Activated CD4-positive, alpha-beta memory T cell treated with anti-CD3 and anti-CD28 coated beads for 36 hours (primary cell): ENCODE measurements at regions of chr5 and their contacts with region 1.

Region 1: DNA sequence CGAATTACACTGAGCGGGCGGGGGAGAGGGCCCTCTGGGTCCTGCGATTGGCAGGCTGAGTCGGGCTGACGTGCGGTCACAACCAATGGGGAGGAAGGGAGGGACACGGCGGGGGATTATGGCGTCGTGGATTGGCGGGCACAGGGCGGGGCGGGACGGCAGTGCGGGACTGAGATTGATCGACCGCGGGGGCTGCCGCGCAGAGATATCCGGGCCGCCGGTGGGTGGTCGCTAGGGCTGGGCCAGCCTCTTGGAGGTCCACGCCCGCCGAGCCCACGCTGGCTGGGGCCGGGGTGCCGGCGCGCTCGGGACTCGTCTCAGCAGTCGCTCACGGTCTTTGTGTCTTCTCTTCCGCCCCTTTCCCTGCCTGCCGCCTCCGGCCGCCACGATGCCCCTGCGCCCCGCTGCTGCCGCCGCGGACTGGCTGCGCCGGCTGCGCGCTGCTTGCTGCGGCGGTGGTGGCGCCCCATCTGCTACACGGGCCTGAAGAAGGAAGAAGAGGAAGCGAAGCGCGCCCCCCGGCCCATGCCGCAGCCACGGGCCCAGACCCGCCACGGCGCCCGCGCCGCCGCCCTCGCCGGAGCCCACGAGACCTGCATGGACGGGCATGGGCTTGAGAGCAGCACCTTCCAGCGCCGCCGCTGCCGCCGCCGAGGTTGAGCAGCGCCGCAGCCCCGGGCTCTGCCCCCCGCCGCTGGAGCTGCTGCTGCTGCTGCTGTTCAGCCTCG is at the start of gene RGMB:
- DNase-seq: peak; percentile 95
- H3K4me3 Mint-ChIP-seq: peak within 1 kb of the TSS; percentile 91
- H3K27ac Mint-ChIP-seq: peak within 1 kb of the TSS; percentile 50
- H3K4me1 Mint-ChIP-seq: peaks cover 45% of the 10 kb centered on the region
- H3K27me3 Mint-ChIP-seq: peaks cover 21% of the 10 kb centered on the region
- total RNA-seq, gene RGMB: 3.3 to 3.8 TPM

Region 2: GRCh38 chr5:97183100-97183929 is 1590.3 kb before region 1 on chr5 and contains the start of gene RIOK2:
- CTCF ChIA-PET with region 1: no interaction called
- POLR2A ChIA-PET with region 1: no interaction called
- intact Hi-C with region 1: loop called (anchors 1 kb)
- DNase-seq: peak; percentile 96
- H3K4me3 Mint-ChIP-seq: peak within 1 kb of the TSS; percentile 87
- H3K27ac Mint-ChIP-seq: peak within 1 kb of the TSS; percentile 98
- H3K4me1 Mint-ChIP-seq: peaks cover 34% of the 10 kb centered on the region
- H3K27me3 Mint-ChIP-seq: no peaks in the 10 kb centered on the region
- total RNA-seq, gene RIOK2: 31.8 to 41.5 TPM

Region 3: GRCh38 chr5:97231025-97231636 is 1542.5 kb before region 1 on chr5:
- CTCF ChIA-PET with region 1: interaction called, 14 read pairs
- POLR2A ChIA-PET with region 1: no interaction called
- intact Hi-C with region 1: loop called (anchors 1 kb)
- DNase-seq: peak; percentile 14
- H3K4me3 Mint-ChIP-seq: no peak overlapping the region
- H3K27ac Mint-ChIP-seq: no peak overlapping the region
- H3K4me1 Mint-ChIP-seq: no peaks in the 10 kb centered on the region
- H3K27me3 Mint-ChIP-seq: peaks cover 4% of the 10 kb centered on the region

Region 4: GRCh38 chr5:97547999-97548738 is 1225.5 kb before region 1 on chr5:
- CTCF ChIA-PET with region 1: no interaction called
- POLR2A ChIA-PET with region 1: no interaction called
- intact Hi-C with region 1: loop called (anchors 10 kb)
- DNase-seq: no peak
- H3K4me3 Mint-ChIP-seq: no peak overlapping the region
- H3K27ac Mint-ChIP-seq: no peak overlapping the region
- H3K4me1 Mint-ChIP-seq: peaks cover 4% of the 10 kb centered on the region
- H3K27me3 Mint-ChIP-seq: no peaks in the 10 kb centered on the region

Region 5: DNA sequence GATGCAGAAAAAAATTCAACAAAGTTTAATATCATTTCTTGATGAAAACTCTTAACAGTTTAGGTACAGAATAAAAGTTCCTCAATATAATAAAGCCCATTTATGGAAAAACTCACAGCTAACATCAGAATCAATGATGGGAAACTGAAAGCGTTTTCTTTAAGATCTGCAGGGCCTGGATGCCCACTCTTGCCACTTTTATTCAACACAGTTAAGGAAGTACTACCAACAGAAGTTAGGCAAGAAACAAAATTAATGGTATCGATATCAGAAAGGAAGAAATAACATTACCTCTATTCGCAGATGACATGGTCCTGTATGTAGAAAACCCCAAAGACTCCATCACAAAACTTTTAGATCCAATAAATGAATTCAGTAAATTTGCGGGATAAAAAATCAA is 542.5 kb before region 1 on chr5:
- CTCF ChIA-PET with region 1: no interaction called
- POLR2A ChIA-PET with region 1: no interaction called
- intact Hi-C with region 1: loop called (anchors 5 kb)
- DNase-seq: no peak
- H3K4me3 Mint-ChIP-seq: no peak overlapping the region
- H3K27ac Mint-ChIP-seq: no peak overlapping the region
- H3K4me1 Mint-ChIP-seq: no peaks in the 10 kb centered on the region
- H3K27me3 Mint-ChIP-seq: no peaks in the 10 kb centered on the region

Region 6: GRCh38 chr5:98679963-98680362 is 93.7 kb before region 1 on chr5:
- CTCF ChIA-PET with region 1: no interaction called
- POLR2A ChIA-PET with region 1: no interaction called
- intact Hi-C with region 1: no loop called
- DNase-seq: no peak
- H3K4me3 Mint-ChIP-seq: no peak overlapping the region
- H3K27ac Mint-ChIP-seq: no peak overlapping the region
- H3K4me1 Mint-ChIP-seq: no peaks in the 10 kb centered on the region
- H3K27me3 Mint-ChIP-seq: peaks cover 3% of the 10 kb centered on the region

Region 7: DNA sequence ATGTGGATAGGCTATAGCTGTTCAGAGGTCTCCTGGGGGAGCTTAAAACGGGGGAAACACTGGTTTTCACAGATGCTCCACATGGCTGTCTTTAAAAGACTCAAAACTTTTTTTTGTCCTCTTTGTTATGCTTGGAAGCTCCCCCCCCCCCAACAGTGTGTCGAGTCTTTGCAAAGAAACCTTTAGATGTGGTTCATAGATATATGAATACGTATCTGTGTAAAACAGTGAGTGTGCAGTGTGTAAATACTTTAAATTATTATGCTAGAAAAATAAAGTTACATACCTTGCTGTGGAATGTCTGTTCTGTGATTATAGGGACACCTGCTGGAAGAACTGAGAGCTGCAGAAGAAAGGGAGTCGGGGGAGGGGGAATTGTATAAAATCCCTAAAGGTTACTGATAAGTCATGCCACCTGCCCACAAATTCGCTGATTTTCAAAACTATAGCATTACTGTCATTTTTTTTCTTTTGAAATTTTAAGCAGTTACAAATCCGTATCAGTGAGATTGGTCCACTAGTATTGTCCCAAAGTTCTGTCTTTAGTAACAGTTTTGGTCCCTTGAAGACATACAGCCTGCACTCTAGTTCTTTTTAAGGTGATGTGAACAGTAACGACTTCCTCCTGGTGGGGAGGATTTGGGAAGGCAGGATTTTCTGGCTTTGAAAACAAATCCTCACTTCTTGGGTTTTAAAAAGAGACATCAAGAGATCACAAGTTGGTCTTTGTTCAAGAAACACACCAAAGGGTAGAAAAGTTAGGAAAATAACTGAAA is 22.8 kb after region 1 on chr5:
- CTCF ChIA-PET with region 1: interaction called, 88 read pairs
- POLR2A ChIA-PET with region 1: no interaction called
- intact Hi-C with region 1: loop called (anchors 1 kb)
- DNase-seq: peak; percentile 67
- H3K4me3 Mint-ChIP-seq: no peak overlapping the region
- H3K27ac Mint-ChIP-seq: no peak overlapping the region
- H3K4me1 Mint-ChIP-seq: peaks cover 4% of the 10 kb centered on the region
- H3K27me3 Mint-ChIP-seq: no peaks in the 10 kb centered on the region

Region 8: DNA sequence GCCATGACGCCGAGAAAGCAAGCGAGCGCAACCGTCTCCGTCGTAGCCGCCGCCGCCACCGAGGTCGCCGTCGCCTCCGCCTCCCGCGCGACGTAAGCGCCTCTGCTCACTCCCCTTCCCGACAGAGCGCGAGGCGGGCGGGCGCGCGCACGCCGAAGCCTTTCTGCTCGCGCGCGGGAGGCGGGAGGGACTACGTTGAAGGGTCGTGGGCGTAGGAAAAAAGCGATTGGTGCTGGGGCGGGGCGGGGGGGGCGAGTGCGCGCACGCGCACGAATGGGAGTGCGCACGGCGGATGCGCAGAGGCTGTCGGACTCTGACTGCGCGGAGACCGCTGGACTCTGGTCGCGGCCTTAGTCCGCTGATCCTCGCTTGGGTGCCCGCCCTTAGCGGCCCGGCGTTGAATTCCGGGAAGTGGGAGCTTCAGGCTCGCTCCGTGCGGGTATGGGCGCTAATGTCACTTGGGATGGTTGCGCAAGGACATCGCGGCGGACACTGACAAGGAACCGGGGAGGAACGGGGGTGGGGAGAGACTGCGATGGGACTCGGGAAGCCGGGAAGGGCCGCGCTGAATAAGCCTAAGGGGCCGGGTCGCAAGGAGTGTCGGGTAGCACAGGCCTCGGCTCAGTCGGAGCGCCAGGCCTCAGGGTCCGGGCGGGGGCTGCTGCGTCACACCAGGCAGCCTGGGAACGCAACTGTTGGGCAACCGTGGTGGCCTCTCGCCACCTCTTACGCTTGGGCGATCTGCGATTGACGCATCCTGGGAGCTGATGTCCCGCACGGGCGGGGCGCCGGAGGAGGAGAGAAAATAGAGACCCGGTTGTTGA is 155.5 kb after region 1 on chr5 and contains the start of gene CHD1:
- CTCF ChIA-PET with region 1: no interaction called
- POLR2A ChIA-PET with region 1: no interaction called
- intact Hi-C with region 1: loop called (anchors 1 kb)
- DNase-seq: peak; percentile 97
- H3K4me3 Mint-ChIP-seq: peak within 1 kb of the TSS; percentile 99
- H3K27ac Mint-ChIP-seq: peak within 1 kb of the TSS; percentile 100
- H3K4me1 Mint-ChIP-seq: peaks cover 55% of the 10 kb centered on the region
- H3K27me3 Mint-ChIP-seq: no peaks in the 10 kb centered on the region
- total RNA-seq, gene CHD1: 50.1 to 53.4 TPM

Region 9: GRCh38 chr5:99379187-99379586 is 605.6 kb after region 1 on chr5:
- CTCF ChIA-PET with region 1: no interaction called
- POLR2A ChIA-PET with region 1: no interaction called
- intact Hi-C with region 1: no loop called
- DNase-seq: no peak
- H3K4me3 Mint-ChIP-seq: no peak overlapping the region
- H3K27ac Mint-ChIP-seq: no peak overlapping the region
- H3K4me1 Mint-ChIP-seq: no peaks in the 10 kb centered on the region
- H3K27me3 Mint-ChIP-seq: no peaks in the 10 kb centered on the region